Mucosa of descending colon (tissue), 3 donors: ENCODE measurements at regions of chr4 and their contacts with region 1.

Region 1: DNA sequence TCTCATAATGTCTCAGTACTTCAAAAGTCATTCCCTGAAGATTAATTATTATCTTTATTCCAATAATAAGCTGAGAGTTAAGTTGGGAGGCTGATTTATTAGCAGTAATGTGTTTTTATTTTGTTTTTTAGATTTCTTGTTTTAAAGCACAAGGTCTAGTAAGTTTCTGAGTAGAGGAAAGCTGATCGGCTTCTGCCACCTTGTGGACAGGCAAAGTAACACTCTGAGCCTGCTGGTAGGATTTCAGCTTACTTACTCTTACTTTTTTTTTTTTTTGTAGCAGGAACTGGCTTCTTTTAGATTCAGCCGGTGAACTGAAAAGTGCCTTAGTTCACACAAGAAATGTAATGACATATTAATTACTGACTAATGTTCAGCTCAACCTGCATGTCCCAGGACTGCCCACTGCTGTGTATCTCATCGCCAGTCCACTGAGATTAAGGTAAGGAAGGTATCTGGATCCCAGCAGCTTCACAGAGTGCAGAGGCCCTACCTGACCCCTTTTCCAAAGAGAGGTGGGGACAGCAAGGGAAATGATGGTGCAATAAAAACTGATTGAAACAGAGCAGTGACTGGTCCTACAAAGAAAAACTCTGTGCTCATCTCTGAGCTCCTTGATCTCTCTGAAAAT is 126.5 kb downstream of the ADGRA3 start:
- DNase-seq: peak in 2 of 3 donors; percentile 39 to 53
- ATAC-seq: peak; percentile 80
- H3K4me3 ChIP-seq: no peak overlapping the region
- H3K4me1 ChIP-seq: no peaks in the 10 kb centered on the region
- CTCF ChIP-seq: peak; percentile 52

Region 2: DNA sequence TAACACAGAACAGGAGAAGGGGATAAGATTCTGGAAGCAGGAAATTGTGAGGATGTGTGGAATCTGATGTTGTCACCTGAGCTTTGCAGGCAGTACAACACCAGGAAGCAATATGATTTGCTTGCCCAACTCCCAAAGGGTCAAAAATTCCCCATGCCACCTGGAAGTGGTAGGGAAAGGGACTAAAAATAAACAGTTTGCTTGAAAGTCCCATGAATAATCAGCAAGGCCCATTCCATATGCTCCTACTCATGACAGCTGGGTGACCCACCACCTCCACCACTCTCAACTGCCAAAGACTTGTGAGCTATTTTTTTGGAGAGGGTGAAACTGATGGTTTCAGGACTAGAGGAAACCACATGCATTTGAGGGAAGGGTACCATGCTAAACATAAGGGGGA is 609.2 kb before region 1 on chr4:
- intact Hi-C with region 1: loop called in 1 of 2 experiments (anchors 10 kb)
- DNase-seq: no peak
- ATAC-seq: no peak
- H3K4me3 ChIP-seq: no peak overlapping the region
- H3K4me1 ChIP-seq: no peaks in the 10 kb centered on the region
- CTCF ChIP-seq: no peak

Region 3: DNA sequence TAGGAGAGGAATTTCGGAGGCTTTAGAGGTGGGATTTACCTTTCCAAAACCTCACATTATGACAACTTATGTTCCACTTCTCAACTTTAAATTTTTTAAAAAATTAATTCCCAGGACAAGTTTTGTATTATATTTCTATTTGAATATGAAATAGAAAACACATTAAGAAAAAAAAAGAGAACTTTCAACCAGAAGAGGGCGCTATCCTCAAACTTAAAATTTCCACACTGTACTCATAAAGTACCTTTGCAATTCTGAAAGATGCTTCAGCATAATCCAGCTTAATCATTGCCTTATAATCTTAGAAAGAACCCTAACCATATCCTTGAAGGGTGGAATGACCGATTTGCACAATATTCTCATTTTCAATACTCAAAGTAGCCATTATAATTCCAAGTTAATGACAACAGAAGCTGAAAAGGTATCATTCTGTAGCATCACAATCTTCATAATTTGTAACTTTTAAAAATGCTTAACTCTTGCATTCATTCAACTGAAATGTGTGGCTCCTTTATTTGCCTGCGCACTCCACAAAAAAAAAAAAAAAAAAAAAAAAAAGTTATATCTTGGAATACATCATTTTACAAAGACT is 598.8 kb before region 1 on chr4:
- intact Hi-C with region 1: loop called (anchors 5 to 10 kb)
- DNase-seq: no peak
- ATAC-seq: no peak
- H3K4me3 ChIP-seq: no peak overlapping the region
- H3K4me1 ChIP-seq: no peaks in the 10 kb centered on the region
- CTCF ChIP-seq: no peak